Panc1 (cell line): ENCODE measurements at regions of chr11 and their contacts with region 1.

Region 1: GRCh38 chr11:3091791-3092602 is 34.8 kb upstream of the CARS1 start:
- DNase-seq: peak; percentile 68
- ATAC-seq: peak; percentile 85
- H3K4me3 ChIP-seq: no peak overlapping the region
- H3K27ac ChIP-seq: no peak overlapping the region
- H3K4me1 ChIP-seq: peaks cover 31% of the 10 kb centered on the region
- H3K27me3 ChIP-seq: no peaks in the 10 kb centered on the region
- CTCF ChIP-seq: peak; percentile 100

Region 2: GRCh38 chr11:2901854-2902783 is 189.9 kb before region 1 on chr11:
- CTCF ChIA-PET with region 1: no interaction called
- POLR2A ChIA-PET with region 1: interaction called, 11 read pairs
- in situ Hi-C with region 1: no loop called
- intact Hi-C with region 1: no loop called
- DNase-seq: peak; percentile 77
- ATAC-seq: peak; percentile 91
- H3K4me3 ChIP-seq: peak overlapping the region; percentile 73 to 75
- H3K27ac ChIP-seq: peak overlapping the region; percentile 86
- H3K4me1 ChIP-seq: peaks cover 49% of the 10 kb centered on the region
- H3K27me3 ChIP-seq: no peaks in the 10 kb centered on the region
- CTCF ChIP-seq: no peak

Region 3: GRCh38 chr11:2930704-2931428 is 161.1 kb before region 1 on chr11:
- CTCF ChIA-PET with region 1: no interaction called
- POLR2A ChIA-PET with region 1: no interaction called
- in situ Hi-C with region 1: no loop called
- intact Hi-C with region 1: loop called (anchors 10 kb)
- DNase-seq: peak; percentile 82
- ATAC-seq: peak; percentile 67
- H3K4me3 ChIP-seq: peak overlapping the region; percentile 73 to 84
- H3K27ac ChIP-seq: peak overlapping the region; percentile 97
- H3K4me1 ChIP-seq: peaks cover 57% of the 10 kb centered on the region
- H3K27me3 ChIP-seq: no peaks in the 10 kb centered on the region
- CTCF ChIP-seq: peak; percentile 100

Region 4: GRCh38 chr11:2968341-2968900 is 123.6 kb before region 1 on chr11:
- CTCF ChIA-PET with region 1: no interaction called
- POLR2A ChIA-PET with region 1: no interaction called
- in situ Hi-C with region 1: no loop called
- intact Hi-C with region 1: no loop called
- DNase-seq: no peak
- ATAC-seq: no peak
- H3K4me3 ChIP-seq: no peak overlapping the region
- H3K27ac ChIP-seq: no peak overlapping the region
- H3K4me1 ChIP-seq: no peaks in the 10 kb centered on the region
- H3K27me3 ChIP-seq: no peaks in the 10 kb centered on the region
- CTCF ChIP-seq: no peak

Region 5: DNA sequence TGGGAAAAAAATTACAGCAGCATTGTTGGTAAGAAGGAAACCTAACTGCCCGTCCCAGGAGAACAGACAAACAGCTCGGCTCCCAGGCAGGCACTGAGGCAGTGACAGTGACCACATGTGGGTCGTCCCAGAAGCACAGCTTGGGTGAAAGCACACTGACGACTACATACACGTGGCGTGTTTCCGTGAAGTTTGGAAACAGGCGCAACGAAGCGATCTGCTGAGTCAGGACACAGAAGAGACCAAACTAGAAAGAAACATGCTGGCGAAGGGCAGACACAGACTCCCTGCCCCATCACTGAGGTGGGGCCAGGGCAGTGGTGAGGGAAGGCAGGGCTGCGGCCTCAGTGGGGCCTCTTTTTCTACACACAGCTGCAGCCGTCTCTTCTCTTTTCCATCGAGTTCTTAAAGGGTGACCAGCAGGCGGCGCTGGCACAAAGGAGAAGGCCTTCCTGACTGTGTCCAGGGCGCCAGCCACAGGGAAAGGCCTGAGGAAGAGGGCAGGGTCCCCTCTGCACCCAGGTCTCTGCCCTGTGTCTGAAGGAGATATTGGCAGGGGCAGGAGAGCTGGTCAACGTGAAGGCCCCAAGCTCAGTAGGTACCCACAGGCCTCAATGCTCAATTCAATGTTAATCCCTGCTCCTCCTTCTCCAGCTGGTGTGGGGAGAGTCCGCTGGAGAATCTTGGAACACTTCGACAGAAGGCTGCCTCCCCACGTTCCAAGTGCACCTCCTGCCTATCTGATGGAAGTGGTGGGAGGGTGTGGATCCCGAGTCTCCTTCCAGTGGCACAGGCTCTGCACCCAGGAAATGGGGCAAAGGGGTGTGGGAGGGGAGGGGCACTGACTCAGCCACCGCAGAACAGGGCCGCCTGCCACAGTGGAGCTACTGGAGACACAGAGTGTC is 54.7 kb before region 1 on chr11:
- CTCF ChIA-PET with region 1: interaction called, 72 read pairs
- POLR2A ChIA-PET with region 1: no interaction called
- in situ Hi-C with region 1: no loop called
- intact Hi-C with region 1: loop called (anchors 2 kb)
- DNase-seq: no peak
- ATAC-seq: peak; percentile 95
- H3K4me3 ChIP-seq: no peak overlapping the region
- H3K27ac ChIP-seq: no peak overlapping the region
- H3K4me1 ChIP-seq: no peaks in the 10 kb centered on the region
- H3K27me3 ChIP-seq: no peaks in the 10 kb centered on the region
- CTCF ChIP-seq: peak; percentile 99

Region 6: GRCh38 chr11:3049430-3050243 is 42.4 kb before region 1 on chr11:
- CTCF ChIA-PET with region 1: interaction called, 14 read pairs
- POLR2A ChIA-PET with region 1: no interaction called
- in situ Hi-C with region 1: no loop called
- intact Hi-C with region 1: no loop called
- DNase-seq: peak; percentile 83
- ATAC-seq: peak; percentile 88
- H3K4me3 ChIP-seq: peak overlapping the region in 1 of 2 experiments; percentile 3; a peak in 2 of 4 replicates
- H3K27ac ChIP-seq: peak overlapping the region; percentile 67
- H3K4me1 ChIP-seq: peaks cover 45% of the 10 kb centered on the region
- H3K27me3 ChIP-seq: no peaks in the 10 kb centered on the region
- CTCF ChIP-seq: no peak

Region 7: GRCh38 chr11:3058753-3059664 is 33.0 kb before region 1 on chr11:
- CTCF ChIA-PET with region 1: interaction called, 13 read pairs
- POLR2A ChIA-PET with region 1: no interaction called
- in situ Hi-C with region 1: no loop called
- intact Hi-C with region 1: no loop called
- DNase-seq: peak; percentile 78
- ATAC-seq: peak; percentile 25; the same call in 1 of the 2 replicates
- H3K4me3 ChIP-seq: no peak overlapping the region
- H3K27ac ChIP-seq: peak overlapping the region; percentile 49
- H3K4me1 ChIP-seq: peaks cover 32% of the 10 kb centered on the region
- H3K27me3 ChIP-seq: no peaks in the 10 kb centered on the region
- CTCF ChIP-seq: no peak